ENCODE measurements at regions of chr2 and their contacts with region 1.

Region 1: GRCh38 chr2:96856776-96857673 is 791 bp downstream of the ANKRD39 start:
- DNase-seq: peak; percentile 52 to 77
- ATAC-seq: no peak
- H3K4me3 ChIP-seq: peak overlapping the region; percentile 22 to 53
- H3K27ac ChIP-seq: no peak overlapping the region
- H3K4me1 ChIP-seq: no peaks in the 10 kb centered on the region
- H3K27me3 ChIP-seq: no peaks in the 10 kb centered on the region

Region 2: GRCh38 chr2:96470636-96471035 is 386.4 kb before region 1 on chr2:
- intact Hi-C with region 1: no loop called
- DNase-seq: peak; percentile 80 to 89
- ATAC-seq: peak; percentile 81
- H3K4me3 ChIP-seq: peak overlapping the region; percentile 4 to 41
- H3K27ac ChIP-seq: no peak overlapping the region
- H3K4me1 ChIP-seq: no peaks in the 10 kb centered on the region
- H3K27me3 ChIP-seq: no peaks in the 10 kb centered on the region

Region 3: GRCh38 chr2:96816128-96816835 is 40.7 kb before region 1 on chr2 and contains the start of gene CNNM3:
- intact Hi-C with region 1: loop called in 1 of 2 experiments (anchors 5 kb)
- DNase-seq: peak; percentile 98 to 99
- ATAC-seq: peak; percentile 97
- H3K4me3 ChIP-seq: peak within 1 kb of the TSS; percentile 66 to 94
- H3K27ac ChIP-seq: peak within 1 kb of the TSS in 1 of 2 donors; percentile 80
- H3K4me1 ChIP-seq: no peaks in the 10 kb centered on the region
- H3K27me3 ChIP-seq: no peaks in the 10 kb centered on the region
- total RNA-seq, gene CNNM3: 11.1 to 16.8 TPM

Region 4: GRCh38 chr2:96951093-96951654 is 94.1 kb after region 1 on chr2:
- intact Hi-C with region 1: loop called (anchors 1 to 2 kb)
- DNase-seq: peak; percentile 79 to 91
- ATAC-seq: peak; percentile 86
- H3K4me3 ChIP-seq: no peak overlapping the region
- H3K27ac ChIP-seq: no peak overlapping the region
- H3K4me1 ChIP-seq: no peaks in the 10 kb centered on the region
- H3K27me3 ChIP-seq: no peaks in the 10 kb centered on the region